ENCODE measurements at regions of chr3 and their contacts with region 1.

Region 1: DNA sequence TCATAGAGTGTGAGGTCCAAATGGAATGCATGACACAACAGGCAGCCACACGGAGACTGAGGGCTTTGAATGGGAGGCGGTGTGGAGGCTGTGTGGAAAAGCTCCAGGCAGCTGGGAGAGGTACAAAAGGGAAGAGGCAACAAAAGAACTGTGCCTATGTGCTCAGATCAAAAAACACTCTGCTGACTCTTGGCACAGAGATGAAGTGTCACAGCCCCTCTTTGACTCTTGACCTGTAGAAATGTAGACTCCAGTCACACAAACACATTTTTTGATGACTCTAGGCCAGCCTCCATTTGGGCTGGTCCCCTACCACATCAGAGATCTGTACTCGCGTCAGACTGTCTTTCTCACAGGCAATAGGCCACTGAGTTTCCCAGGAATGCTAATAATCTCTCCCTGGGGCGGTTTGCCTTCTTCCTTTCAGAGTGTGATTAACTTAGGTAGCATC is 456.0 kb downstream of the TUSC7 start:
- DNase-seq: no peak
- ATAC-seq: no peak
- H3K4me3 ChIP-seq: no peak overlapping the region
- H3K27ac ChIP-seq: no peak overlapping the region
- H3K4me1 ChIP-seq: no peaks in the 10 kb centered on the region
- H3K27me3 ChIP-seq: no peaks in the 10 kb centered on the region

Region 2: DNA sequence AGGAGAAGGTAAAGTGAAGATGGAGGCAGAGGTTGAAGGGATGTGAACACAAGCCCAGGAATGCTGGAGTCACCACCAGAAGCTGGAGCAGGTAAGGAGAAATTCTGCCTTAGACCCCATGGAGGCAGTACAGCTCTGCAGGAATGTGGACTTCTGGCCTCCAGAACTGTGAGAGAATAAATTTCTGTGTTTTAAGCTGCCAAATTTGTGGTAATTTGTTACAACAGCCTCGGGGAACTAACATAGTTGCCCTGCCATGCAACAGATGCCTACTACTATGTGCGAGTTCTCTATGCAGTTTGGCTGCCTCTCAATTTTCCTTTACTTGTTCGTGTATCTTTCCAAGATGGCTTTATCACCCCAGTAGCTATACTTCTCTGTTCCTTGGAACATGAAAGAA is 62.0 kb before region 1 on chr3:
- intact Hi-C with region 1: loop called in 1 of 2 experiments (anchors 10 kb)
- DNase-seq: no peak
- ATAC-seq: no peak
- H3K4me3 ChIP-seq: no peak overlapping the region
- H3K27ac ChIP-seq: no peak overlapping the region
- H3K4me1 ChIP-seq: no peaks in the 10 kb centered on the region
- H3K27me3 ChIP-seq: no peaks in the 10 kb centered on the region